HAP-1 (cell line): ENCODE measurements at regions of chr2 and their contacts with region 1.

Region 1: DNA sequence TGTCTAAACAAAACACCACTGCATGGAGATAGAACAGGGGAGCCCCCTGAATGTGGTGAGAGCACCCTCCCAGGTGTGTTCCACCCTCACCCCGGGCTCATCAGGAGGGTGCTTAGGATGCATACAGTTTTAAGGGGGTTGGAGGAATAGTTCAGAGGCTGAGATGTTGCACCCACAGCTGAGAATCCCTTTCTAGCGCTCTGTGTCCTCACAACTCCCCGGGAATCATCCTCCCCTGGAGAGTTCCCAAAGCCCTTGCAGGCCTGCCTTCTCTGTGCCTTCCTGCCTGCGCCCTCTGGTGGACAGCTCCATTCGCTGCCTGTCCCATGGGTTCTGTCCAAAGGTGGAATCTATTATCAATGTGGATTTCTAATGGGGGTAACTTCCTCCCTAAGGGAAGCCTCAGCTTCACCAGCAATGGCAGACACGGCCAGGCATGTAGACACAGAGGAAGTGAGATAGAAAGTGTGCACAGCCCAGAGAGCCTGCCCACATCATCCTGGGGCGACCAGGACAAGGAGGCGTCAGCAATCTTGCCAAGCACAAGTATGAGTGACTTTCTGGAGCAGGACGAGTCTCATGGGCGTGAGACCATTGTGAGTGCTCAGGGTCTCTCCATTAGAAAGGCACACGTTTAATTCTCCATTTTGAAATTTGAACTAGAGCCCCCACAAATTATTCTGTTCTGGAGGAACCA is 1.2 kb upstream of the UGT1A5 start:
- DNase-seq: peak; percentile 87 to 96
- H3K4me3 ChIP-seq: no peak overlapping the region
- H3K4me1 ChIP-seq: peaks cover 23% of the 10 kb centered on the region
- H3K27me3 ChIP-seq: no peaks in the 10 kb centered on the region

Region 2: DNA sequence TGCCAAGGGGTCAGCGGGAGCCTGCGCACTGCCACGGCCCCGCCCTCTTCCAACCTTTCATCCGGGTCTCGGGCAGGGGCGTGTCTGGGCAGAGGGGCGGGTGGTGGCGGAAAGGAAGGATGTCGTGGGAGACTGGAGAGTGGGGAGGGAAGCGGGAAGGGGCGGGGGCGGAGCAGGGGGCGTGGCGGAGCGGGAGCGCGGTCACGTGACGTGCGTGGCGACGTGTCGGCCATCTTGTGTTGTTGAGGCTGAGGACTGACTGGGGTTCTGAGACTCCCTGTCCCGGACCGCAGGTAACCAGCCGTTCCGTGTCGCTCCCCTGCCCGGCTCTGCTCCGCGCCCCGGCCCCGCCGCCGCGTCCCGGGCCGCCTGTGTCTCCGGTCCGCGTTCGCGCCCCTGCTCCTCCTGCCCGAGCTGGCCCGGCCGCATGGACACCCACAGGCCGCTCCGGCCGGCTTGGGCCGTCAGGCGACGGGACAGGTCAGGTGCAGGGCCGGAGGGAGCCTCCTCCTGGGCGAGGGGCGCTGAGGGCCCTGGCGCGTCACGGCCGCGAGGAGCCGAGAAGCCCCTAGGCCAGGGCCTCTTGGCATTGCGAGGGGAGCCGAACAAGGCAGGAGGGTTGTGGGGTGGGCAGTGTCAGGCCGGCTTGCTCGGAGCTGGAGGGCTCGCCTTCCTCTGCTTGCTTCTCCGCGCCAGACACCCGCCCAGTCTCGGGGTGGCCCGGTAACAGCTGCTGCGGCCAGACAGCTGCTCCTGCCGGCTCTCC is 1014.2 kb before region 1 on chr2 and contains the start of gene GIGYF2:
- in situ Hi-C with region 1: no loop called
- DNase-seq: peak; percentile 96 to 99
- H3K4me3 ChIP-seq: peak within 1 kb of the TSS; percentile 91
- H3K4me1 ChIP-seq: peaks cover 15% of the 10 kb centered on the region
- H3K27me3 ChIP-seq: no peaks in the 10 kb centered on the region

Region 3: GRCh38 chr2:233480490-233481202 is 230.8 kb before region 1 on chr2:
- in situ Hi-C with region 1: loop called (anchors 10 kb)
- DNase-seq: peak in 1 of 2 experiments; percentile 7
- H3K4me3 ChIP-seq: no peak overlapping the region
- H3K4me1 ChIP-seq: no peaks in the 10 kb centered on the region
- H3K27me3 ChIP-seq: no peaks in the 10 kb centered on the region